ENCODE measurements at regions of chr5 and their contacts with region 1.

Region 1: GRCh38 chr5:142128675-142129208 is 20.2 kb downstream of the NDFIP1 start:
- DNase-seq: no peak
- ATAC-seq: no peak
- H3K4me3 ChIP-seq: no peak overlapping the region
- H3K27ac ChIP-seq: no peak overlapping the region
- H3K4me1 ChIP-seq: peaks cover 0 to 40% (median 17%) of the 10 kb centered on the region in 12 donors
- H3K27me3 ChIP-seq: no peaks in the 10 kb centered on the region
- CTCF ChIP-seq: no peak
- POLR2A ChIP-seq: no peak

Region 2: GRCh38 chr5:142053426-142054151 is 75.2 kb before region 1 on chr5:
- intact Hi-C with region 1: loop called in 1 of 10 experiments (anchors 10 kb)
- DNase-seq: peak in 3 of 5 donors; percentile 22 to 33 (median 30)
- ATAC-seq: peak; percentile 48 to 91 (median 84)
- H3K4me3 ChIP-seq: no peak overlapping the region
- H3K27ac ChIP-seq: peak overlapping the region in 5 of 12 donors; percentile 20 to 79 (median 39)
- H3K4me1 ChIP-seq: peaks cover 0 to 32% (median 10%) of the 10 kb centered on the region in 12 donors
- H3K27me3 ChIP-seq: no peaks in the 10 kb centered on the region
- CTCF ChIP-seq: no peak
- POLR2A ChIP-seq: no peak